ENCODE measurements at regions of chr10 and their contacts with region 1.

Region 1: DNA sequence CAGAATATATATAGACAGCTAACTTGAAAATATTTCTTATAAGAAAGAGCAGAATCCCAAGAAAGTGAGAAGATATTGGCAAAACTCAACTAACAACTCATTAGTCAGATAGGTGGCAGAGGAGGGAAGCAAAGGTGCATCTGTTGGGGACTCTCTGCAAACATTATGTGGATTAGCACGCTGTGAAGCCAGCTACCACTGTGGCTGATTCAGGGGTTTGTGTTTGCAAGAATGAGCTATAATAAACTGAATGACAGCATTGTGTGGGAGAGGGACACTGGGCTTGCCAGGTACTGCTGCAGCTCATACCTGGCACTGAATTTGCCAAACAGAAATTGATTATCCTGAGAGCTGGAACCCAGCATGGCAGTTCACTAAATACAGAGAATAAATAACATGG is 170.3 kb upstream of the MINDY3 start:
- DNase-seq: no peak
- H3K4me3 ChIP-seq: no peak overlapping the region
- H3K27ac ChIP-seq: no peak overlapping the region
- H3K4me1 ChIP-seq: no peaks in the 10 kb centered on the region
- H3K27me3 ChIP-seq: no peaks in the 10 kb centered on the region
- CTCF ChIP-seq: no peak

Region 2: GRCh38 chr10:15433850-15434537 is 596.6 kb before region 1 on chr10:
- CTCF ChIA-PET with region 1: no interaction called
- dilution Hi-C with region 1: no loop called
- in situ Hi-C with region 1: no loop called
- intact Hi-C with region 1: no loop called
- DNase-seq: peak; percentile 25
- H3K4me3 ChIP-seq: peak overlapping the region; percentile 44 to 55 (median 45)
- H3K27ac ChIP-seq: no peak overlapping the region
- H3K4me1 ChIP-seq: no peaks in the 10 kb centered on the region
- H3K27me3 ChIP-seq: no peaks in the 10 kb centered on the region
- CTCF ChIP-seq: peak; percentile 61 to 65

Region 3: DNA sequence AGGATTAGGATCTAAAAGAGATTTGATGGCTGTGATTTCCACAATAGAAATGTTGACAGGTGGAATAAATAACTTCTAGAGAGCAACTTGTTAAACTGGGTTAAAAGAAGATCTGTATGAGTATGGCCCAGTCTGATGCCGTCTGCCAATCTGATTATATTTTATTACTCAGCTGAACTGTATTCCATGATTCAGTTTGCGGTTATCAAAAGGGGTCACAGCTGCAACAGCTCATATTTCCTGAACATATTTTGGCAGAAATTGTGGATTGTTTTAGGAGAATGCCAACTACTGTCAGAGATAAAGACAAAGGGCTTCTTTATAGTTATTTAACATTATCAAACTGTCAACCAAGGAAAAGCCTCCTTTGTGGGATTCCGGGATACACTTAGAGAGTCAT is 74.5 kb after region 1 on chr10:
- CTCF ChIA-PET with region 1: no interaction called
- dilution Hi-C with region 1: loop called (anchors 5 kb)
- in situ Hi-C with region 1: no loop called
- intact Hi-C with region 1: no loop called
- DNase-seq: peak; percentile 67
- H3K4me3 ChIP-seq: no peak overlapping the region
- H3K27ac ChIP-seq: no peak overlapping the region
- H3K4me1 ChIP-seq: no peaks in the 10 kb centered on the region
- H3K27me3 ChIP-seq: no peaks in the 10 kb centered on the region
- CTCF ChIP-seq: no peak

Region 4: DNA sequence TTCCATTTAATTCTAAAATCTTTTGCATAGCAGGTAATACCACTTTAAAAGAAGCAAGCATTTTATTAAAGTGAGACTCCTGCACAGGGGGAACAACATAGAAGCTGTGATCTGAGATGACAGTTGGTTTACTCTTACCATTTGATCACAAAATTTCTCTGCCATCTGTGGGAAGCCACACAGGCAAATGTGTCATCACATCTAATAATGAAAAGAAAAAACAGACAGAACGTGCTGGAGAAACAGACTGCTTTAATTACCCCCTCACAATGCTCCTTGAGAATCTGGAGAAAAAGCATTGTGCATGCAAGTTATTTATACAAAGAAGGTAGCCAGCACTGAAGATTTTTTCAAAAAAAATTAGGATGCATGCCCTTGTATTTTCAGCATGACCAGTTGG is 241.0 kb after region 1 on chr10:
- CTCF ChIA-PET with region 1: no interaction called
- dilution Hi-C with region 1: no loop called
- in situ Hi-C with region 1: no loop called
- intact Hi-C with region 1: no loop called
- DNase-seq: no peak
- H3K4me3 ChIP-seq: no peak overlapping the region
- H3K27ac ChIP-seq: no peak overlapping the region
- H3K4me1 ChIP-seq: no peaks in the 10 kb centered on the region
- H3K27me3 ChIP-seq: no peaks in the 10 kb centered on the region
- CTCF ChIP-seq: no peak

Measured in mammary epithelial cell (primary cell).